B cell (primary cell): ENCODE measurements at regions of chr3 and their contacts with region 1.

Region 1: GRCh38 chr3:13452490-13453335 is 27.4 kb upstream of the HDAC11 start:
- DNase-seq: peak; percentile 74
- ATAC-seq: no peak
- H3K4me3 ChIP-seq: peak overlapping the region in 4 of 5 experiments; percentile 54 to 65 (median 59)
- H3K4me3 Mint-ChIP-seq: peak overlapping the region; percentile 87
- H3K27ac ChIP-seq: peak overlapping the region; percentile 67 to 78
- H3K27ac Mint-ChIP-seq: peak overlapping the region; percentile 84
- H3K4me1 ChIP-seq: peaks cover 6 to 16% of the 10 kb centered on the region in 2 donors
- H3K4me1 Mint-ChIP-seq: peaks cover 18% of the 10 kb centered on the region
- H3K27me3 ChIP-seq: no peaks in the 10 kb centered on the region
- H3K27me3 Mint-ChIP-seq: no peaks in the 10 kb centered on the region
- CTCF ChIP-seq: peak; percentile 84

Region 2: DNA sequence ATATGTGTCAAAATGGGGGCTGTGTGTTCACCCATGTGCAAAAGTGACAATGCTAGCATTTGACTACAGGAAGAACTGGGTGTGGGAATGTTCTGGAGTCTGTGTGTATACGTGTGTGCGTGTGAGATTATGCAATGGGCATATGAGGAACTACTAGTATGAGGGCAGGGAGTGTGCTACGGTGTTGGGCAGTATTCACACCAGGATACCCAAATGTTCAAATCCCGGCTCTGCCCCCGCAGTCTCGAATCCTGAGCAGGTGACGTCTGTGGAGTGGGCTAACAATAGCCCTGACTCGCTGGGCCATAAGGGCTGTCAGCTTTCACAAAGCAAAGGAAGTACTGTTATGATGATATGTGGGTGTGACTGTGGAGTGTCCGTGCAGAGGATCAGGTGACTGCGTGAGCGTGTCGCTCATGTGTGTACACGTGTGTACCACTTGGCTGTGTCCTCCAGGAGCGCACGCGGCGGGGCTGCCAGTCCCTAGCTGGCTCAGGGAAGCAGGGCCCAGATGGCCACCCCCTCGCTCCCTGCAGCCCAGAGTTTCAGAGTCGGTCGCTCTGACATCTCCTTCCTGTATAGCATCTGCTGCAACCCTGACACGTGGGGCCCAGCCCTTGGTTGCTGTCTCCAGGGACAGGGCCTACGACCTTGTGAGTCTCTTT is 406.7 kb before region 1 on chr3:
- CTCF ChIA-PET with region 1: no interaction called
- POLR2A ChIA-PET with region 1: no interaction called
- intact Hi-C with region 1: loop called (anchors 1 kb)
- DNase-seq: peak; percentile 90
- ATAC-seq: peak; percentile 92
- H3K4me3 ChIP-seq: peak overlapping the region in 2 of 5 experiments; percentile 26 to 42
- H3K4me3 Mint-ChIP-seq: peak overlapping the region; percentile 90
- H3K27ac ChIP-seq: peak overlapping the region; percentile 89
- H3K27ac Mint-ChIP-seq: peak overlapping the region; percentile 87
- H3K4me1 ChIP-seq: peaks cover 63 to 71% of the 10 kb centered on the region in 2 donors
- H3K4me1 Mint-ChIP-seq: peaks cover 70% of the 10 kb centered on the region
- H3K27me3 ChIP-seq: no peaks in the 10 kb centered on the region
- H3K27me3 Mint-ChIP-seq: no peaks in the 10 kb centered on the region
- CTCF ChIP-seq: no peak

Region 3: DNA sequence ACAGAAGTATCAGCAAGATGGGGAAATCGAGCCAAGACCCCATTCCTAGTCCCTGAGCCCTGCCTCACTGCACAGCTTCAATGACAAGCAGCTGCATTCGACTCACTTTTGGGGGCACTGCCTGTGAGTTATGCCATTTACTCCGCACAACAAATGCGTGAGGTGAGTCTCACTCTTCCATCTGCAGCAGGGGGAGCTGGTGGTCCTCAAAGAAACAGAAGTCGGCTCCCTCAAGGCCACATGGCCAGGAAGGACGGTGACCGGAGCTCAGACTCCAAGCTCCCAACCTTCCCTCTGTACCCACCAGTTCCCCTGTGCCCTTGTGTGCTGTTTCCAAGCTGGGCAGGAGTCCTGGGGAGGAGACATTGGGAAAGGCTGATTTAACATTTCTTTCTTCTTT is 251.8 kb before region 1 on chr3:
- CTCF ChIA-PET with region 1: interaction called, 11 read pairs
- POLR2A ChIA-PET with region 1: no interaction called
- intact Hi-C with region 1: no loop called
- DNase-seq: no peak
- ATAC-seq: no peak
- H3K4me3 ChIP-seq: no peak overlapping the region
- H3K4me3 Mint-ChIP-seq: no peak overlapping the region
- H3K27ac ChIP-seq: no peak overlapping the region
- H3K27ac Mint-ChIP-seq: no peak overlapping the region
- H3K4me1 ChIP-seq: peaks cover 15 to 16% of the 10 kb centered on the region in 2 donors
- H3K4me1 Mint-ChIP-seq: peaks cover 16% of the 10 kb centered on the region
- H3K27me3 ChIP-seq: peaks cover 0 to 40% (median 10%) of the 10 kb centered on the region in 4 experiments
- H3K27me3 Mint-ChIP-seq: peaks cover 39% of the 10 kb centered on the region
- CTCF ChIP-seq: no peak

Region 4: DNA sequence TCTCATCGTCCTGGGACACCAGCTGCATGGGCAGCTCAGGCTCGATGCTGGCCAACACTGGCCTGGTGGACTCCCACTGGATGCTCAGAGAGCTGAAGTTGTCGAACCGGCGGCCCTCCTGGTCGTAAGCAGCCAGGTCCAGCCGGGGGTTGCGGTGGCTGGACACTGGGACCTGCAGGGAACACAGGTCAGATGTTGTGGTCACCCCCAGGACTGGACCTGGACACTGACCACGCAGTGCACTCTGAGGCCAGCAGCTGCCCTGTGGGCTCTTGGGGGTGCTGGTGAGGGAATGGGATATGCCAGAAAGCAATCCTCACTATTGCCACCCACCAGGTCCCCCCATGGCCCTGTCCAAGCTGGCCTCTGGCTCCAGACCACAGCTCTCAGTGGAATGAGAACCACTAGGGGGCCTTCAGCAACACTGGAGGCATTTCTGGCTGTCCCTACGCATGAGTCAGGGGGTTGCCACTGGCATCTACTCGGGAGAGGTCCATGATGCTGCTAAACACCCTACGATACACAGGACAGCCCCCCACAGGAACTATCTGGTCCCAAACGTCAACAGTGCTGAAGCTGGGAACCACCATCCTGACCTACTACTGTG is 98.7 kb before region 1 on chr3:
- CTCF ChIA-PET with region 1: interaction called, 40 read pairs
- POLR2A ChIA-PET with region 1: no interaction called
- intact Hi-C with region 1: loop called (anchors 5 kb)
- DNase-seq: no peak
- ATAC-seq: no peak
- H3K4me3 ChIP-seq: no peak overlapping the region
- H3K4me3 Mint-ChIP-seq: no peak overlapping the region
- H3K27ac ChIP-seq: no peak overlapping the region
- H3K27ac Mint-ChIP-seq: peak overlapping the region; percentile 68
- H3K4me1 ChIP-seq: peaks cover 0 to 12% of the 10 kb centered on the region in 2 donors
- H3K4me1 Mint-ChIP-seq: peaks cover 15% of the 10 kb centered on the region
- H3K27me3 ChIP-seq: no peaks in the 10 kb centered on the region
- H3K27me3 Mint-ChIP-seq: no peaks in the 10 kb centered on the region
- CTCF ChIP-seq: no peak

Region 5: GRCh38 chr3:13403818-13404216 is 48.9 kb before region 1 on chr3:
- CTCF ChIA-PET with region 1: interaction called, 52 read pairs
- POLR2A ChIA-PET with region 1: no interaction called
- intact Hi-C with region 1: no loop called
- DNase-seq: no peak
- ATAC-seq: no peak
- H3K4me3 ChIP-seq: no peak overlapping the region
- H3K4me3 Mint-ChIP-seq: no peak overlapping the region
- H3K27ac ChIP-seq: no peak overlapping the region
- H3K27ac Mint-ChIP-seq: no peak overlapping the region
- H3K4me1 ChIP-seq: peaks cover 0 to 4% of the 10 kb centered on the region in 2 donors
- H3K4me1 Mint-ChIP-seq: peaks cover 38% of the 10 kb centered on the region
- H3K27me3 ChIP-seq: no peaks in the 10 kb centered on the region
- H3K27me3 Mint-ChIP-seq: no peaks in the 10 kb centered on the region
- CTCF ChIP-seq: no peak

Region 6: DNA sequence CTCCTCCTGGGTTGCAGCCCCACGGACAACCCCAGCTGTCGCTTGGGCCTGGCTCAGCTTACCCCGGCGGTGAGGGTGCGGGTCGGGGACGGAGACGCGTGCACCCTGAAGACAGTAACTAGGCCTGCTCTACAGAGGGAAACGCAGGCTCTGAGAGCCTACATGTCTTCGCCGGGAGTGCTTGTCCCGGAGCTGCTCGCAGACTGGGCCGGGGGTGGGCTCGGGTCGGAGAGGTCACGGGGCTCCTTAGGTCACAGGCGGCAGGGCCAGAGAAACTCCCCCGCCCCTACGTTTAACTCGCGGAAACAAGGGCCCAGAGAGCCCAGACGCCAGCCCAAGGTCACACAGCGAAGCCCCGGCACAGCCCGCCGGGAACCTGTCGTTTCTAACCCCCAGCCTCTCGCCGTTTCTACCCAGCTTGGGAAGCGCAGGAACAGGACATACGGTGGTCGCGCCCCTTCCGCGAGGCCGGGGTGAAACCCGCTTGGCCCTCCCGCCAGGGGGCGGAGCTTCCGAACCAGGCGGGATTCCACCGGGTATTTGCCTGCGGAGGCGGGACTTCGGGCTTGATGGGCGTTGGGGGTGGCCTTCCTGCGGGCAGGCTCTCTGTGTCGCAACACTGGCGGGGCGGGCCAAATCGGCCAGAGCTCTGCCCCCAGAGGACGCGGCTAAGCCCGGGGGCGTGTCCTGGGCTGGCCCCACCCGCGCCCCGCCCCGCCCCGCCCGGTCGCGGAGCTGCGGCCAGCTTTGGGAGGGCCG is 27.0 kb after region 1 on chr3 and contains the start of gene HDAC11:
- CTCF ChIA-PET with region 1: interaction called, 13 read pairs
- POLR2A ChIA-PET with region 1: interaction called, 7 read pairs
- intact Hi-C with region 1: loop called (anchors 1 kb)
- DNase-seq: peak; percentile 97
- ATAC-seq: peak; percentile 97
- H3K4me3 ChIP-seq: peak within 1 kb of the TSS; percentile 65 to 90 (median 80)
- H3K4me3 Mint-ChIP-seq: peak within 1 kb of the TSS; percentile 92
- H3K27ac ChIP-seq: peak within 1 kb of the TSS; percentile 61 to 86
- H3K27ac Mint-ChIP-seq: peak within 1 kb of the TSS; percentile 84
- H3K4me1 ChIP-seq: peaks cover 0 to 16% of the 10 kb centered on the region in 2 donors
- H3K4me1 Mint-ChIP-seq: peaks cover 7% of the 10 kb centered on the region
- H3K27me3 ChIP-seq: no peaks in the 10 kb centered on the region
- H3K27me3 Mint-ChIP-seq: peaks cover 3% of the 10 kb centered on the region
- CTCF ChIP-seq: no peak
- total RNA-seq, gene HDAC11: 5.5 and 6.1 TPM in 2 replicates

Region 7: DNA sequence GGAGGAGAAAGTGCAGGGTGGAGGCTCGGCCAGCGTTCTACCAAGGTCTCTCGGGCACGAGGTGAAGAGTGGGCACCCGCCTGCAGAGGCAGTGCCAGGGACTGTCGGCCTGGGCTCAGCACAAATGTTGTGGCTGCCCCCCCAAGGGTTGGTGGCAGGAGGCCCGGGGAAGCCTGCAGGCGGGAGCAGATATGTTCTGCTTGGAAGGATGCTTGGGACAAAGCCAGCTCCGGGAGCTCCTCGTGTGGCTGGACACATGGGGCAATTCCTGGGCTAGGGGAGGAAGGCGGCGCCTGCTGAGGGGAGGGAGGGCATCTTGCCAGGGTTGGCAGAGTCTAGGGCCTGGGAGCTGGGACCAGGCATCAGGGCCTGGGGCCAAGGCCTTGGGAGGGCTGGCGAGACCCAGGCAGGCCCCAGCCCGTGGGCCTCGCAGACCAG is 65.8 kb after region 1 on chr3:
- CTCF ChIA-PET with region 1: no interaction called
- POLR2A ChIA-PET with region 1: no interaction called
- intact Hi-C with region 1: no loop called
- DNase-seq: no peak
- ATAC-seq: no peak
- H3K4me3 ChIP-seq: no peak overlapping the region
- H3K4me3 Mint-ChIP-seq: no peak overlapping the region
- H3K27ac ChIP-seq: no peak overlapping the region
- H3K27ac Mint-ChIP-seq: no peak overlapping the region
- H3K4me1 ChIP-seq: no peaks in the 10 kb centered on the region
- H3K4me1 Mint-ChIP-seq: no peaks in the 10 kb centered on the region
- H3K27me3 ChIP-seq: no peaks in the 10 kb centered on the region
- H3K27me3 Mint-ChIP-seq: peaks cover 5% of the 10 kb centered on the region
- CTCF ChIP-seq: no peak

Region 8: DNA sequence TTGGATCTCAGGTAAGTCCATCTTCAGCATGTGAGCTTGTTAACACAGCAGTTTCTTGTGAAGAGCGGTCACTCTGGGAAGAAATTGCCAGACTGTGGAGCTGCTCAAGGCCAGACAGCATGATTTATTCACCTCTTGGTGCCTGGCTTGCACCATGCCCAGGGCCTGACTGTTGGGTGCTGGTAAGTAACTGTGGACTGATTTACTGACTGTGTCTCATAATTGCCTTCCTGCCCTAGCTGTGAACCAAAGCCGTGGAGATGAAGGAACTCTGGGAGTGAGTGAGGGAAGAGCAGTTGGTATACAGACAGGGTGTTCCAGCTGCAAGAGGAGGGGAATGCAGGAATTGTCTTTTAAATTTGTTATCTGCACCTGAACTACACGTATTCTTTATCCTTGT is 445.6 kb after region 1 on chr3:
- CTCF ChIA-PET with region 1: no interaction called
- POLR2A ChIA-PET with region 1: no interaction called
- intact Hi-C with region 1: no loop called
- DNase-seq: no peak
- ATAC-seq: no peak
- H3K4me3 ChIP-seq: no peak overlapping the region
- H3K4me3 Mint-ChIP-seq: no peak overlapping the region
- H3K27ac ChIP-seq: no peak overlapping the region
- H3K27ac Mint-ChIP-seq: no peak overlapping the region
- H3K4me1 ChIP-seq: peaks cover 8 to 22% of the 10 kb centered on the region in 2 donors
- H3K4me1 Mint-ChIP-seq: peaks cover 20% of the 10 kb centered on the region
- H3K27me3 ChIP-seq: peaks cover 0 to 7% (median 0%) of the 10 kb centered on the region in 4 experiments
- H3K27me3 Mint-ChIP-seq: peaks cover 32% of the 10 kb centered on the region
- CTCF ChIP-seq: no peak